H1 (cell line): ENCODE measurements at regions of chr17 and their contacts with region 1.

Region 1: DNA sequence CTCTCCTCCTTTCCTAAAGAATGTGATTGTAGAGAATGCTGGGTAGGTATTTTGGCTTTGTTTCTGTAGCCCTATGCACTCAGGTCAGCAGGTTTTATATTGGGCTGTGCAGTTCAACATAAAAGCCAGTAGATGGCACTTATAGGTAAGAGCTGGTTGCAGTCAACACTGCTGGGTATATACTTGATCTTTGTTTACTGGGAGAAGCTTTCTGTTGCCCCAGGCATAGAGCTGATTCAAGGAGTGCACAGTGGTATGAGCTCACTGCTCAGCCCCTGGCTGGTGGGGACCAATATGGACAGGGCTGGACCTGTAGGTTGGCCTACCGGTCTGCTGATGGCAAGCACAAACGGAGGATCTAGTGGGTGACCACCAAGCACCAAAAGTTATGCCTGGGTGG is 378.9 kb downstream of the PMP22 start:
- DNase-seq: peak in 1 of 2 experiments; percentile 0
- H3K4me3 ChIP-seq: no peak overlapping the region
- H3K27ac ChIP-seq: no peak overlapping the region
- H3K4me1 ChIP-seq: no peaks in the 10 kb centered on the region
- H3K27me3 ChIP-seq: no peaks in the 10 kb centered on the region
- CTCF ChIP-seq: peak in 2 of 3 experiments; percentile 57 to 63; a peak in 3 of 4 replicates
- EP300 ChIP-seq: no peak
- POLR2A ChIP-seq: no peak
- RAD21 ChIP-seq: peak; percentile 69 to 80

Region 2: DNA sequence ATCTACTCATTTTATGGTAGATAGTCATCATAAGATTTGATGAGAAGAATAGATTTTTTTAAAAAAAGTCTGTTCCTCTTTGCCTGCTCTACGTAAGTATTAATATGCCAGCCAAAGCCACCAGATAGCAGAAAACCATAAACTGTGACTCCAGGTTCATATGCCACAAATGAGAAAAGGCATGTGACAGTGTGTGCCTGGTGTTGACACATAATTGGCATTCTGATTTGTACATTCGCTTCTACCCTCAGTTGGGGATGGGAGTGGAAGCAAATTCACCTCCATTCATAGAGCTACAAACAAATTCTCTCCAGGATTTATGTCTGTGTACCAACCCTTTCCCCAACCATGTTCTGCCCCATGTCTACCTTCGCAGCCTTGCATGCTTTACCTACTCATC is 12.7 kb before region 1 on chr17:
- CTCF ChIA-PET with region 1: interaction called, 11 read pairs
- POLR2A ChIA-PET with region 1: no interaction called
- DNase-seq: no peak
- H3K4me3 ChIP-seq: no peak overlapping the region
- H3K27ac ChIP-seq: no peak overlapping the region
- H3K4me1 ChIP-seq: no peaks in the 10 kb centered on the region
- H3K27me3 ChIP-seq: no peaks in the 10 kb centered on the region
- CTCF ChIP-seq: no peak
- EP300 ChIP-seq: no peak
- POLR2A ChIP-seq: no peak
- RAD21 ChIP-seq: no peak